KBM-7 (cell line): ENCODE measurements at regions of chr4 and their contacts with region 1.

Region 1: DNA sequence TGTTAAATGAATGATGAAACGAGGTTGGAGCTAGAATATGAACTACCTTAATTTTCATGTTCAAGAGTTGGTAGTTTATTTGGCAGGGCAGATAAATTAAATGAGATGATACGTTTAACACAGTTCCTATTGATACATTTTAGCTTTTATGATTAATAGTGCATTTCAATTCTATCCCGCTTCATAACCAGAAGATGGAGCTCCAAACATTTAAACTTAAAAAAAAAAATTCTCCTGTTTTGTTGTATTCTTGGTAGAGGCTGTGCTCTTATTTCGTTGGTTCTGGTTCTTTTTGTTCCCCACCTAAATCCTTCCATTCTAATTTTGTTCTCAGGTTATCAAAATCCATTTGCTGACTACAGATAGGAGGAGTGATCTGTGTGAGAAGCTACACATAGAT is 71.8 kb upstream of the PTPN13 start:
- DNase-seq: peak; percentile 28

Region 2: GRCh38 chr4:86261636-86262035 is 260.7 kb before region 1 on chr4:
- in situ Hi-C with region 1: no loop called
- DNase-seq: no peak

Region 3: DNA sequence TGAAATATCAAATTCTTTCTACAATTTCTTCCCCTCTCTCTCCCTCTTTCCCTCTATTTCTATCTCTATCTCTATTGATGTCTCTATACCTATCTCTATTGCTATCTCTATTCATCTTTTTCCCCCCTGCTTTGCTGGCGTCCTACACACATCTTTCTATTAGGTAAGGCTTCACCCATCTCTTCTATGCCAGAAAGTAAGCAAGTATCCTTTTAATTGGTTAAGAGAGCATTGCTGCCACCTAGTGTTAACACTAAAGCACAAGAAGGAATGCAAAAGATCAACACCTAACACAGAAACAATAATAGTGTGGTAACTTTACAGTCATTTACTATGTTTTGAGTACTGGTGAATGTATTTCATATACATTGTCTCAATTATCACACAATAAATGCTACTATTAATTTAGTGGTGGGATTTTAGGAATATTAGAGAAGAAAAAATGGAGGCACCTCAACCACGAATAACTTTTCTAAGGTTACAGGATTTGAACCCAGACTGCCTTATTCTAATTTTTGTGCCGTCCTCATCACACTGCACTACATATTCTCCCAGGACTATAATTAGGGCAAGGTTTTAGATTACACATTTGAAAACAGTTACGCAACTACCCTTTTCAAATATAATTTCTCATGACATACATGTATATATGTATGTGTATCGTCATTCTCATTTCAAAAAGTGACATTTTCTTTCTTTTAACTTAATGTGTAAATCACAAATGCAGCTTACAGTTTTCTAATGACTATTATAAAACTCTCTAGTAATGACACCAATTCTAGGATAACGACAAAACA is 373.5 kb after region 1 on chr4:
- in situ Hi-C with region 1: loop called (anchors 25 kb)
- DNase-seq: peak; percentile 79